CD8-positive, alpha-beta T cell (primary cell): ENCODE measurements at regions of chr21 and their contacts with region 1.

Region 1: DNA sequence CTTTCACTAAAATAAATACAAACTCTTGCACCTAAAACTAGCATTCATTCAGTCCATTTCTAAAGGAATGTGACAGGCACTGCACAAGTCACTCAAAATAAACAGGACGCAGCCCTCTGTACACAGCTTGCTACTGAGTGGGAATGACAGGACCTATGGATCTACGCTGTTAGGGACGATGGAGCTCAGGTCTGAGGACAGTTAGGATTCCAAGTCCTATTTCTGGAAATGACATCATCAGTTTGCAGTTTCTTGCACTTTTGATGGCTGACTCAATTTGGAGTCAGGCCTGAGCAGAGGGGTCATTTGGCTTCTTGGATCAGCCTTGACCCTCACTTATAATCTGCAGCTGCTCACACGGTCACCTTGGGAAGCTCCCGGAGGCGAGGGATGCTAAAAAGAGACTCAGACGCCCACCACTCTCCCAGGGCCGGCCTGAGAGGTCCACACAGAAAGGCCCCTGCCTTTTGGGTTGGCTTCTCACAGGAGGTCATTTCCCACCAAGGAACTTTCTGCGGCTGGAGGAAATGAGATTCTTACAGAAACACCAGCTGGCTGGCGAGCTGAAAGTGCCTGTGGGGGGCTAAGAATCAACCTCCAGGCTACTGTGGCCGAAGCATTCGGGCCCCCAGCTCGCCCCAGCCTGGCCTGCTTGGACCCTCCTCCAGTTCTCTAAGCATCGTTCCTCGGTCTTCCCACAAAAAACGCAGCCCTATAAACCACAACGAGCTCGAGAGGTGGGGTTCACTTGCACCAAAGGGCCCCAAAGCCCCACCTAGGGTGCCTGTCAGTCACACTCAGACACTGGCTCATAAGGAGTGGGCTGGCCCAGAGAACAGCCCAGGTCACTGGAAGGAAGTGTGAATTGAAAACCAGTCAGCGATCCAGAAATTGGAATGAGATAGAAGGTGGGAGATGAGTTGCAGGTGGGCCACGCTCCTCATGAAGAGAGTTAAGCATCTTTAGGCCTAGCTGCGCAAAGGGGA is 8.9 kb upstream of the PDE9A start:
- DNase-seq: no peak
- ATAC-seq: no peak
- H3K4me3 ChIP-seq: no peak overlapping the region
- H3K4me3 Mint-ChIP-seq: no peak overlapping the region
- H3K27ac ChIP-seq: no peak overlapping the region
- H3K27ac Mint-ChIP-seq: no peak overlapping the region
- H3K4me1 ChIP-seq: no peaks in the 10 kb centered on the region
- H3K4me1 Mint-ChIP-seq: no peaks in the 10 kb centered on the region
- H3K27me3 ChIP-seq: no peaks in the 10 kb centered on the region
- H3K27me3 Mint-ChIP-seq: peaks cover 4% of the 10 kb centered on the region
- CTCF ChIP-seq: no peak

Region 2: DNA sequence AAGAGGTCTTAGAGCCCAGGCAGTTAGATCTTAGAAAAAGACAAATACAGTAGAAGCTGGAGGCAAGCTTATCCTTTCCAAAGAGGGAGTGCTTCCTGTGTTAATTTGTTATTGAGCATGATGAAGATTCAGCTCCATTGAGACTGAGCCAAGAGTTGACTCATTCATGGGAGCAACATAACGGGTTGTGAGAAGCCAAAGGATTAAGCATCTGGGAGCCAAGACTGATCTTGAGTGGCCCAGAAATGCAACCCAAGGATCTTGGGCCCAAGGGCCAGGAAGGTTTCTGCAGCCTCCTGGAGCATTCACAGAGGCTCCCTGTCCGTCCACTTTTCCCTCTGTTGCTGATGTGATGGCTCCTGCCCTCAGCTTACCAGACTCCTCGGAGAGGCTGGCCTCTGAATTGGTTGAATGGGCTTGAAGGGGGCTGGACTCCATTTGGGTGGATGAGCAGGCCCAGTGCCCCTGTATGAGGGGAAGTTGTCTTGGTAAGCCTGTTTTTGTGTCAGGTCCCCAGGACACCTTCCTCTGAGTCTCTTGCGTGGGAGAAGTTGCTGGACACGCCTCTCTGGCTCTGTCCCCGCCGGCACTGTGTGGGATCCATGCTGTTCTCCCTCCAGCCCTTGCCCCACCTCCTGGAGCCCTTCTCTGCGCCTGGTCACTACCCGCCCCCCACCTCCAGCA is 51.3 kb after region 1 on chr21:
- CTCF ChIA-PET with region 1: no interaction called
- POLR2A ChIA-PET with region 1: no interaction called
- intact Hi-C with region 1: loop called in 1 of 2 experiments (anchors 5 kb)
- DNase-seq: no peak
- ATAC-seq: no peak
- H3K4me3 ChIP-seq: no peak overlapping the region
- H3K4me3 Mint-ChIP-seq: no peak overlapping the region
- H3K27ac ChIP-seq: no peak overlapping the region
- H3K27ac Mint-ChIP-seq: no peak overlapping the region
- H3K4me1 ChIP-seq: no peaks in the 10 kb centered on the region
- H3K4me1 Mint-ChIP-seq: no peaks in the 10 kb centered on the region
- H3K27me3 ChIP-seq: no peaks in the 10 kb centered on the region
- H3K27me3 Mint-ChIP-seq: no peaks in the 10 kb centered on the region
- CTCF ChIP-seq: no peak